AG04449 (cell line): ENCODE measurements at regions of chr1 and their contacts with region 1.

Region 1: DNA sequence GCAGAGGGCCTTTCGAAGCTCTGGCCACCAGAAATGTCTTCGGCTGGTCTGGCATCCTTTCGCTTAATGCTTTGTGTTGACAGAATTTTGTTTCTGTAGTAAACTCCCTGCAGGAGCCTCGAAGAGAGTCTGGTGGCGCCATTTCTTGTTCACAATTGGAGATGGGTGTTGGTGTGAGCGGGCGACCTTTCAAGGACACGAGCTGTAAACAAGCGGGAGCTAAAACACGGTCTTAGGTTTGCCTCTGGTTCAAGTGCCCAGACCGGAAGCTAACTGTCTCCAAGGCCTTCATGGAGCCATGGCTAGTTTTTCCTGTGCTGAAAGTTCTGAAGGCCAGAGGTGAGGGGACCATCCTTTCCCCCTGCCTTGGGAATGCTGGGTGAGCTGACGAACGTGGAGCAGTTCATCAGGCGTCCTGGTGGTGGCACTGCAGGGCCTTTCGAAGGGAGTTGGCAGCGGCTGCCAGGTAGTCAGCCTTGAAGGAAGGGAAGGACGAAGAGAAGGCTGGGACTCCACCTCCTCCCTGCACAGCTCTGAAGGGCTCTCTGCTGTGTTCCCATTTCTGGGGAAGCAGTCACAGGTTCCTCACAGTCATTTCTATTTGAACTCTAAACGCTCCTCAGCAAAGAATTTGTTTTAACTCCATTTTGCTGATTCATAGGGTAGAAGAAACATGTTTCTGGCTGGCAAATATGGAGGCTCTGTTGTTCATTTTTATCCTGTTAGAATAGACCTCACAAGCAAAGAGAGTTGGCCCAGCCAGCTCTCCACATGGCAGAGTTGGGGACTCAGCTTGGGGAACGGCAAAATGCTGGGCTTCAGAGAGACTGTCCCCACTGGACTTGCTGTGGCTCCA is 35.2 kb downstream of the URB2 start:
- DNase-seq: peak; percentile 17
- H3K4me3 ChIP-seq: no peak overlapping the region
- CTCF ChIP-seq: peak; percentile 95

Region 2: GRCh38 chr1:229171934-229172333 is 489.3 kb before region 1 on chr1:
- CTCF ChIA-PET with region 1: no interaction called
- POLR2A ChIA-PET with region 1: no interaction called
- DNase-seq: no peak
- H3K4me3 ChIP-seq: no peak overlapping the region
- CTCF ChIP-seq: no peak

Region 3: GRCh38 chr1:229650045-229650444 is 11.2 kb before region 1 on chr1:
- CTCF ChIA-PET with region 1: interaction called, 17 read pairs
- POLR2A ChIA-PET with region 1: no interaction called
- DNase-seq: no peak
- H3K4me3 ChIP-seq: no peak overlapping the region
- CTCF ChIP-seq: no peak

Region 4: GRCh38 chr1:229674042-229674441 is 12.8 kb after region 1 on chr1:
- CTCF ChIA-PET with region 1: interaction called, 24 read pairs
- POLR2A ChIA-PET with region 1: no interaction called
- DNase-seq: no peak
- H3K4me3 ChIP-seq: no peak overlapping the region
- CTCF ChIP-seq: no peak

Region 5: DNA sequence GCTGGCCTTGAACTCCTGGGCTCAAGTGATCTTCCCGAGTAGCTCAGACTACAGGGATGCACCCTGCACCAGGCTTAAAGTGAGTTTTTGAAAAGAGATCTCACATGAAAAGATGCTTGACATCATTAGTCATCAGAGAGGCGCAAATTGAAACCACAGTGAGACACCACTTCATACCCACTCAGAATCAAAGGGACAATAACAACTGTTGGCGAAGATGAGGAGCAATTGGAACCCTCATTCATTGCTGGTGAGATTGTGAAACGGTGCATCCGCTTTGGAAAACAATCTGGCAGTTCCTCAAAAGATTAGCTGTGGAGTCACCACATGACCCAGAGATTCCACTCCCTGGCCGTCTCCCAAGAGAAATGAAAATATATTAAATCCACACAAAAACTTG is 642.6 kb after region 1 on chr1:
- CTCF ChIA-PET with region 1: interaction called, 11 read pairs
- POLR2A ChIA-PET with region 1: no interaction called
- DNase-seq: no peak
- H3K4me3 ChIP-seq: no peak overlapping the region
- CTCF ChIP-seq: no peak